ENCODE measurements at regions of chr12 and their contacts with region 1.

Region 1: GRCh38 chr12:18139989-18140596 is 50.1 kb upstream of the RERGL start:
- DNase-seq: no peak
- ATAC-seq: peak; percentile 44; the same call in 1 of the 3 replicates
- H3K4me3 ChIP-seq: no peak overlapping the region
- H3K27ac ChIP-seq: no peak overlapping the region
- H3K4me1 ChIP-seq: no peaks in the 10 kb centered on the region
- H3K27me3 ChIP-seq: no peaks in the 10 kb centered on the region
- CTCF ChIP-seq: peak in 2 of 3 experiments; percentile 32 to 40; a peak in 4 of 6 replicates
- EP300 ChIP-seq: no peak
- POLR2A ChIP-seq: no peak
- RAD21 ChIP-seq: peak; percentile 58

Region 2: DNA sequence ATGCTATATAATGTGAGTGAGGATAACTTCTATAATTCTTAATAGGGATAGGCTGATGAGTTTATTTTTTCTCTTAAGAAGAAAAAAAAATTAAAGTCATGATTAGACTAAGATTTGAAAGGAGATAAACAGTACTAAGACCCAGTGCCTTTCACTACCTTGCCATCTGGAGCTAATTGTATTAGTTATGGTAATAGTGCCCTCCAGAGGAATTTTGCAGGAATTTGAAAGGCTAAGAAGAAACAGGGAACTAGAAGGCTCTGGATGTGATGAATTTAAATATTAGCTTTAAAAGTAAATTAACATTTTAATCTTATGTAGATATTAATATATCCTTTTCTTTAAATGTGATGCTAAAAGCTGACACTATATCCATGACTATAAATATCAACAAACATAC is 84.7 kb after region 1 on chr12:
- CTCF ChIA-PET with region 1: interaction called, 7 read pairs
- POLR2A ChIA-PET with region 1: no interaction called
- RAD21 ChIA-PET with region 1: interaction called, 11 read pairs
- SMC1A ChIA-PET with region 1: interaction called, 6 read pairs
- in situ Hi-C with region 1: no loop called
- intact Hi-C with region 1: loop called (anchors 1 kb)
- DNase-seq: no peak
- ATAC-seq: peak; percentile 37; the same call in 1 of the 3 replicates
- H3K4me3 ChIP-seq: no peak overlapping the region
- H3K27ac ChIP-seq: no peak overlapping the region
- H3K4me1 ChIP-seq: no peaks in the 10 kb centered on the region
- H3K27me3 ChIP-seq: no peaks in the 10 kb centered on the region
- CTCF ChIP-seq: peak; percentile 8 to 40 (median 22); a peak in 2 of 6 replicates
- EP300 ChIP-seq: no peak
- POLR2A ChIP-seq: no peak
- RAD21 ChIP-seq: peak; percentile 72

Region 3: GRCh38 chr12:18302809-18303430 is 162.8 kb after region 1 on chr12:
- CTCF ChIA-PET with region 1: no interaction called
- POLR2A ChIA-PET with region 1: no interaction called
- RAD21 ChIA-PET with region 1: no interaction called
- SMC1A ChIA-PET with region 1: no interaction called
- in situ Hi-C with region 1: no loop called
- intact Hi-C with region 1: no loop called
- DNase-seq: no peak
- ATAC-seq: no peak
- H3K4me3 ChIP-seq: no peak overlapping the region
- H3K27ac ChIP-seq: no peak overlapping the region
- H3K4me1 ChIP-seq: no peaks in the 10 kb centered on the region
- H3K27me3 ChIP-seq: no peaks in the 10 kb centered on the region
- CTCF ChIP-seq: no peak
- EP300 ChIP-seq: no peak
- POLR2A ChIP-seq: no peak
- RAD21 ChIP-seq: no peak

Region 4: GRCh38 chr12:18320036-18320617 is 180.0 kb after region 1 on chr12:
- CTCF ChIA-PET with region 1: interaction called, 24 read pairs
- POLR2A ChIA-PET with region 1: no interaction called
- RAD21 ChIA-PET with region 1: no interaction called
- SMC1A ChIA-PET with region 1: interaction called, 7 read pairs
- in situ Hi-C with region 1: loop called (anchors 5 kb)
- intact Hi-C with region 1: loop called (anchors 2 kb)
- DNase-seq: no peak
- ATAC-seq: peak; percentile 90
- H3K4me3 ChIP-seq: no peak overlapping the region
- H3K27ac ChIP-seq: no peak overlapping the region
- H3K4me1 ChIP-seq: no peaks in the 10 kb centered on the region
- H3K27me3 ChIP-seq: no peaks in the 10 kb centered on the region
- CTCF ChIP-seq: peak; percentile 26 to 45 (median 42); a peak in 4 of 6 replicates
- EP300 ChIP-seq: no peak
- POLR2A ChIP-seq: no peak
- RAD21 ChIP-seq: peak; percentile 43; the same call in 1 of the 2 replicates

Region 5: DNA sequence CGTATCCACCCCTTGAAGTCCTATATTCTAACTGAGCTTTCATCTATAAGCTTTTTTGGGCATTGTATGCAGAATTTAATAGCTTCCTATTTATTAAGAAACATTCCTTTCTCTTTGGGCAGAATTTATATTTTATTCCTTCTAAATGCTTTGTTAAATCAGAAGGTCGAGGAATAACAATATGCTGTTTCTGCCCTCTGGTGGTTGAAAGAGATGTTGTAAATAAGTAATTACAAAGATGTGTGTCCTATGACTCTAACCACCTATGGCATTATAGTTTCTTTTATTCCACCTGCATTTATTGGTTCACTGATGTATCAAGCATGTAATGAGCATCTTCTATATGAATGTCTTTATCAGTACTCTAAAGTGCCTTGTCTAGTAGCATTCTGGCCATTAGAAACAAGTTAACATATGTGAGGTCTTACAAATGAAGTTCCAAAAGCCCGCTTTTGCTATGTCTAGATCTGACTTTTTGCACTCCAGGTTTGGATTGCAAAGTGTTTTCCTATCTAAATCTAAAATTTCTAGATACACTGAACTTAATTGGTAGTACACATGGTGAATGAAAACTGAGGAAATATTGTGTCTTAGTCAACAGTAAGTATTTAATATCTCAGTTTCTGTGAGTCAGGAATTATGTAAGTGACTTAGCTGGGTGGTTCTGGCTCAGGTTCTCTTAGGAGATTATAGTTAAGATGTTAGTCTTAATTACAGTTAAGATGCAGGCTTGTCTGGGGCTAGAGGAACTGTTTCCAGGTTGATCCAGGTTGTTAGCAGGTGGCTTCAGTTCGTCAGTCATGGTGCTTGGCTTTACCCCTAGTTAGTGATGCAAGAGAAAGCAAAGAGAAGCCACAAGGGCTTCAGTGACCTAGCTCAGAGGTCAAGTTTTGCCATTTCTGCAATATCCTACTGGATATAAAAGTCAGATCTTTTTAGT is 1046.9 kb after region 1 on chr12:
- CTCF ChIA-PET with region 1: interaction called, 3 read pairs
- POLR2A ChIA-PET with region 1: no interaction called
- RAD21 ChIA-PET with region 1: no interaction called
- SMC1A ChIA-PET with region 1: no interaction called
- in situ Hi-C with region 1: loop called (anchors 10 kb)
- intact Hi-C with region 1: loop called (anchors 5 kb)
- DNase-seq: no peak
- ATAC-seq: peak; percentile 53; the same call in 2 of the 3 replicates
- H3K4me3 ChIP-seq: no peak overlapping the region
- H3K27ac ChIP-seq: no peak overlapping the region
- H3K4me1 ChIP-seq: no peaks in the 10 kb centered on the region
- H3K27me3 ChIP-seq: no peaks in the 10 kb centered on the region
- CTCF ChIP-seq: peak in 2 of 3 experiments; percentile 40 to 52; a peak in 4 of 6 replicates
- EP300 ChIP-seq: no peak
- POLR2A ChIP-seq: no peak
- RAD21 ChIP-seq: peak; percentile 63

Measured in GM12878 (cell line).